Posterior vena cava (tissue), 2 donors: ENCODE measurements at regions of chr20 and their contacts with region 1.

Region 1: DNA sequence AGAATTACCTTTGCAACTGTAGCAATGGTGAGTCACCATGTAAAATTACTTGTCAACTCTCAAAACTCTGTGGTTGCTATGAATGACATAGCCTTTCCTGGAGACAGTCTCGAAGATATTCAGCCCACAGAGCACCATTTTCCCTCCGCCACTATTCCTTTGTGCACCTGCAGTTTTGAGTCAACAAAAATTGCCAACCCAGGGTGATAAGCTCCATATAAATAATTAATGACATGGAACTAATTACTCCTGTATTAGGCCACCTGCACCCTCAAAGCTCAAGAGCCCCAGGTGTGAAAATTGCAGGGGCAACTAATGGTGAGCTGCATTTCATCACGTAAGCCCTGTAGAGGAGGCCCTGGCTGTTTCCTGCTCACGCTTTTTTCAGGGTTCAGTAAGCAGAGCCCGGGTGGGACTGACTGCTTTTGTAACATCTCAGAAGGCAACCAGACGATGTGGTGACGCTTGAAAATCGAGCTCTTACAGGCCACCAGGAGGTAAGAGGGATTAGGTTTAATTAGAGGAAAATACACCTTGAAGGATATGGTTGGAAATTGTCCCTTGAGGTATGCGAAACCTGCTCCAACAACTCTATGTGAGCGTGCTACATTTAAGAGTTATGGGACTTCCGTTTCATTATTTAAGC is 70.8 kb downstream of the BMP2 start:
- DNase-seq: no peak

Region 2: GRCh38 chr20:6920991-6921613 is 82.8 kb after region 1 on chr20:
- intact Hi-C with region 1: loop called in 1 of 2 experiments (anchors 2 kb)
- DNase-seq: no peak